ENCODE measurements at regions of chr1 and their contacts with region 1.

Region 1: GRCh38 chr1:64823691-64824476 is 79.0 kb downstream of the RAVER2 start:
- DNase-seq: peak; percentile 74
- ATAC-seq: peak; percentile 29
- H3K4me3 Mint-ChIP-seq: no peak overlapping the region
- H3K27ac Mint-ChIP-seq: no peak overlapping the region
- H3K4me1 Mint-ChIP-seq: peaks cover 34% of the 10 kb centered on the region
- H3K27me3 Mint-ChIP-seq: no peaks in the 10 kb centered on the region

Region 2: GRCh38 chr1:64744492-64745180 is 79.2 kb before region 1 on chr1 and contains the start of gene RAVER2:
- CTCF ChIA-PET with region 1: interaction called, 30 read pairs
- DNase-seq: peak; percentile 80
- ATAC-seq: peak; percentile 85
- H3K4me3 Mint-ChIP-seq: peak within 1 kb of the TSS; percentile 85
- H3K27ac Mint-ChIP-seq: peak within 1 kb of the TSS; percentile 78
- H3K4me1 Mint-ChIP-seq: peaks cover 15% of the 10 kb centered on the region
- H3K27me3 Mint-ChIP-seq: peaks cover 9% of the 10 kb centered on the region
- total RNA-seq, gene RAVER2: 5.7 to 8.8 TPM

Region 3: DNA sequence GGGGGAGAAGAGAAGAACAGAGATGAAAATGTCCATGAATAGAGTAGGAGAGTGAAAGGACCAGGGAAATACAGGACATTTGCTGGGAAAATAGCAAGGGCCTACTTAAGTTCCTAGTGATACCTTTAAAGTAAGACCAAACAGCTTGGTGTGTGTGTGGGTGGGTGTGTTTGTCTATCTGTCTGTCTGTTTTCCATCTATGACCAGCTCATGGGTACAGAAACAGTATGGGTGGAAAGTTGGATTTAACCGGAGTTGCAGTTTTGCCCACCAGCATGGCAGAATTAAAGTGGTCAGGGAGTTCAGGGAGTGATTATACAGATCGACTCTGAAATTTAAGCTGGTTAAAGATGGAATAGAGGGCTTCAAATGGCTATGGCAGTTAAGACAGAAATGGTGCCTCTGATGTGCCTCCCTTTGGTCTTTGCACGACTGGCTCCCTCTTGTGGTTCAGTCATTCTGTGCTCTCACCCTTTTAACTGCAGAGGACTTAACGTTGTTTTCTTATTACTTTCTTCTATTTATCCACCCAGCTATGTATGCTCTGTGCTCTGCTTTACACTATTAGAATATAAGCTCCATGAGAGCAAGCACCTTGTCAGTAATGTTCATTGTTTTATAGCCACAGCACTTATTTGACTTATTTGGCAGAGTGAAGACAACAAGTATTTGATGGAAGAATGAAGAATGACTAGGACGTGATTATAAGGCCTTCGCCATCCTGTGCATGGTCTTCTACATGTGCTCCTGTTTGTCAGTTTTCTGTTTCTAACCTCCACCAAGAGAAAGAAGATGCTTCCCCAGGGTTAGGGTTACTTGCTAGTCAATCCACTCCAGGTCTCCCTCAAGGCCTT is 251.5 kb after region 1 on chr1:
- CTCF ChIA-PET with region 1: interaction called, 18 read pairs
- DNase-seq: peak; percentile 79
- ATAC-seq: peak; percentile 98
- H3K4me3 Mint-ChIP-seq: no peak overlapping the region
- H3K27ac Mint-ChIP-seq: no peak overlapping the region
- H3K4me1 Mint-ChIP-seq: peaks cover 11% of the 10 kb centered on the region
- H3K27me3 Mint-ChIP-seq: peaks cover 8% of the 10 kb centered on the region

Measured in activated CD8-positive, alpha-beta memory T cell treated with anti-CD3 and anti-CD28 coated beads, Interleukin-2, amount 10 ng/mL, durations not matched to agents 7 days and 5 days (primary cell).